ENCODE measurements at regions of chr3 and their contacts with region 1.

Region 1: DNA sequence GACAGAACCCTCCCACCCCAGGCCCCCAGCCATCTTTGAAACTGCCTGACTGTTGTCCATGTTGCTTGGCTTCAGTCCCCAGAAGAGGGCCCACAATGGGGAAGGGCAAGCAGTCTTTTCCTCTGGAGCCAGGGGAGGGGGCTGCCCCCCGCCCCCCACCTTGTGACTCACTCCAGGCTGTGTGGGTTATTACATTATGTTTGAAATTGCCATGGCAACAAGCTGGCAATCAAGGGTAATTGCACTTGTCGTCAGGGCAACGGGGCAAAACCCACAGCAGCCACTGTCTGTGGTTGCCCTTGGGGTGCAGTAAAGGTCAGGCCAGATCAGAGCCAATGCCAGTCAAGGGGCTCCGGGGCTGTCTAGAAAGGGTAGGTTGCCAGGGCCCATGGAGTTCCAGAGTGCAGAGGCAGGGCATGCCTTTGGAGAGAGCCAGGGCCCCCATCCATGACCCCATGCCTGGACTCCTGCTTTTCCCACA is 3.1 kb upstream of the CAMKV start:
- DNase-seq: no peak
- ATAC-seq: peak; percentile 13
- H3K4me3 ChIP-seq: no peak overlapping the region
- H3K27ac ChIP-seq: peak overlapping the region; percentile 10
- H3K4me1 ChIP-seq: peaks cover 32% of the 10 kb centered on the region
- H3K27me3 ChIP-seq: peaks cover 0 to 31% of the 10 kb centered on the region in 2 experiments; a peak in 4 of 5 replicates
- CTCF ChIP-seq: no peak
- EP300 ChIP-seq: no peak
- POLR2A ChIP-seq: no peak
- RAD21 ChIP-seq: no peak

Region 2: GRCh38 chr3:49844464-49845183 is 28.2 kb before region 1 on chr3:
- CTCF ChIA-PET with region 1: no interaction called
- POLR2A ChIA-PET with region 1: no interaction called
- in situ Hi-C with region 1: no loop called
- intact Hi-C with region 1: loop called (anchors 1 kb)
- DNase-seq: peak; percentile 89
- ATAC-seq: peak; percentile 85
- H3K4me3 ChIP-seq: no peak overlapping the region
- H3K27ac ChIP-seq: peak overlapping the region; percentile 75
- H3K4me1 ChIP-seq: peaks cover 54% of the 10 kb centered on the region
- H3K27me3 ChIP-seq: no peaks in the 10 kb centered on the region
- CTCF ChIP-seq: no peak
- EP300 ChIP-seq: peak in 1 of 2 experiments; percentile 50; a peak in 2 of 4 replicates
- POLR2A ChIP-seq: no peak
- RAD21 ChIP-seq: no peak

Region 3: GRCh38 chr3:49899815-49900214 is 27.0 kb after region 1 on chr3:
- CTCF ChIA-PET with region 1: no interaction called
- POLR2A ChIA-PET with region 1: interaction called, 3 read pairs
- in situ Hi-C with region 1: no loop called
- intact Hi-C with region 1: loop called (anchors 2 kb)
- DNase-seq: no peak
- ATAC-seq: peak; percentile 3; the same call in 1 of the 3 replicates
- H3K4me3 ChIP-seq: no peak overlapping the region
- H3K27ac ChIP-seq: no peak overlapping the region
- H3K4me1 ChIP-seq: peaks cover 36% of the 10 kb centered on the region
- H3K27me3 ChIP-seq: peaks cover 1 to 3% of the 10 kb centered on the region in 2 experiments; a peak in 1 of 5 replicates
- CTCF ChIP-seq: peak; percentile 74
- EP300 ChIP-seq: no peak
- POLR2A ChIP-seq: no peak
- RAD21 ChIP-seq: no peak

Region 4: GRCh38 chr3:50089609-50089945 is 216.7 kb after region 1 on chr3:
- CTCF ChIA-PET with region 1: no interaction called
- POLR2A ChIA-PET with region 1: no interaction called
- in situ Hi-C with region 1: no loop called
- intact Hi-C with region 1: no loop called
- DNase-seq: no peak
- ATAC-seq: peak; percentile 7
- H3K4me3 ChIP-seq: peak overlapping the region; percentile 91 to 100 (median 99)
- H3K27ac ChIP-seq: peak overlapping the region; percentile 99
- H3K4me1 ChIP-seq: peaks cover 37% of the 10 kb centered on the region
- H3K27me3 ChIP-seq: no peaks in the 10 kb centered on the region; a peak in 1 of 5 replicates
- CTCF ChIP-seq: no peak
- EP300 ChIP-seq: no peak
- POLR2A ChIP-seq: no peak
- RAD21 ChIP-seq: no peak

Measured in HepG2 (cell line).